ENCODE measurements at regions of chr7 and their contacts with region 1.

Region 1: DNA sequence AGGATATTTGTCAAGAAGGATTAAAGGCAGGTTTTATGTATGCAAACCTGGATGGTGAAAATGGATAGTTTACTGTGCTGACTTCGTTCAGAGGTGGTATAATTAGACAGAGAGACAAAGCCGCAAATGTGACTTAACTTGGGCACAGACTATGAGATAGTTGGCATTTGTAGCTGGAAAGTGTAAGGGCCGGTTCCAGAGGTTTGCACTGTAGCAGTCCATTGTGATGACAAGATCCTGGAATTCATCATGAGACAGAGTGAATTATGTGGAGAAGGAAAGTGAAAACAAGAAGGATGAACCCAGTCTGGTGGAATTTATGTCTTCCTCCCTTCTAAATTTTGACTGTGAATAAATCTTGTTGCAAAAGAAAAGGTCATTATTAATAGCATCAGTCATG is 139.0 kb downstream of the CNTNAP2 start:
- DNase-seq: no peak
- H3K4me3 ChIP-seq: no peak overlapping the region
- H3K27ac ChIP-seq: no peak overlapping the region
- H3K4me1 ChIP-seq: no peaks in the 10 kb centered on the region
- H3K27me3 ChIP-seq: no peaks in the 10 kb centered on the region
- CTCF ChIP-seq: no peak
- POLR2A ChIP-seq: no peak

Region 2: DNA sequence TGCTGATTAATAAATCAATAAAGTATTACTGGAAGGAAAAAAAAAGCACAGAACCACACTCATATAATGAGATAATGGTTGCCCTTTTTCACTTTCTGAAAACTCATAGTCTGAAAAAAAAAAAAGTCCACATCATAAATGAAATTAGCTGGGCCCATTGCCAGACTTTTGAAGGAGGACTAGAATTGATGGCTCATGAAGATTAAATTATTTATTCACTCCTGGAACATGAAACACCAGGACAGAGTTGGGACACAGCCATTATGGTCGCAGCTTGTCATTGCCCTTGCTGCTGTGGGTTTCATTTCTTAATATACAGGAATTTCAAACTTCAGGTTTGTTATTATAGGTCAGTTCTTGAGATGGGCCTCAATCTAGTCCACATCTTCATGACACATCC is 47.1 kb before region 1 on chr7:
- intact Hi-C with region 1: loop called (anchors 2 kb)
- DNase-seq: no peak
- H3K4me3 ChIP-seq: no peak overlapping the region
- H3K27ac ChIP-seq: no peak overlapping the region
- H3K4me1 ChIP-seq: no peaks in the 10 kb centered on the region
- H3K27me3 ChIP-seq: no peaks in the 10 kb centered on the region
- CTCF ChIP-seq: no peak
- POLR2A ChIP-seq: no peak